Heart left ventricle (tissue), 16 donors: ENCODE measurements at regions of chr15 and their contacts with region 1.

Region 1: DNA sequence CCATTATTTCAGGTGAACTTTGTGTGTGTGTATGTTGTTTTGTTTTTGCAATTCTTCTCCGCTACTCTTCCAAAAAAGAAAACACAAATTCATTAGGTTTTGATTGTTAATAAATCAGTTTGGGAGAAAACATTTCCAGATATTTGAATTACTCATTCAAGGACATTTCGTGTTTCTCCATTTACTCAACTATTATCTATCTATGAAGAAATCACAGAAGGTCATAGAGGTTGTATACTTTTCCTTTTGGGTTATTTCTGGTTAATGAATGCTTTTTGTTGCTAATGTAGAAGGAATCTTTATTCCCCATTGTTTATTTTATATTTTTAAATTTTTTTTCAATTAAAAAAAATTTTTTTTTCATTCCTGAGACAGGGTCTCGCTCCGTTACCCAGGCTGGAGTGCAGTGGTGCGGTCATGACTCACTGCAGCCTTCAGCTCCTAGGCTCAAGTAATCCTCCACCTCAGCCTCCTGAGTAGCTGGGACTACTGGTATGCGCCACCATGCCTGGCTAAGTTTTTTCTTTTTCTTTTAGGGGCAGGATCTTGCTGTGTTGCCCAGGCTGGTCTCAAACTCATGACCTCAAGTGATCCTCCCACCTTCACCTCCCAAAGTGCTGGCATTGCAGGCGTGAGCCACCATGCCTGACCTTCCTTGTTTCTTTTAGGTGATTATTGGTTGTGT is 28.4 kb downstream of the IGF1R start:
- DNase-seq: no peak
- ATAC-seq: no peak
- H3K4me3 ChIP-seq: no peak overlapping the region
- H3K27ac ChIP-seq: peak overlapping the region in 6 of 12 donors; percentile 6 to 82 (median 30)
- H3K4me1 ChIP-seq: peaks cover 0 to 64% (median 32%) of the 10 kb centered on the region in 12 donors
- H3K27me3 ChIP-seq: no peaks in the 10 kb centered on the region
- CTCF ChIP-seq: no peak
- POLR2A ChIP-seq: no peak

Region 2: GRCh38 chr15:98719137-98719740 is 42.5 kb after region 1 on chr15:
- intact Hi-C with region 1: loop called in 4 of 10 experiments (anchors 5 to 10 kb)
- DNase-seq: no peak
- ATAC-seq: no peak
- H3K4me3 ChIP-seq: no peak overlapping the region
- H3K27ac ChIP-seq: peak overlapping the region in 10 of 12 donors; percentile 61 to 81 (median 69)
- H3K4me1 ChIP-seq: peaks cover 0 to 99% (median 57%) of the 10 kb centered on the region in 12 donors
- H3K27me3 ChIP-seq: no peaks in the 10 kb centered on the region
- CTCF ChIP-seq: no peak
- POLR2A ChIP-seq: no peak